ENCODE measurements at regions of chr3 and their contacts with region 1.

Region 1: GRCh38 chr3:153161138-153161713 is 800 bp upstream of the RAP2B start:
- DNase-seq: peak; percentile 81 to 96
- ATAC-seq: peak; percentile 72 to 89 (median 78)
- H3K4me3 ChIP-seq: peak overlapping the region; percentile 91
- H3K4me3 Mint-ChIP-seq: peak overlapping the region; percentile 98
- H3K27ac ChIP-seq: peak overlapping the region; percentile 87
- H3K27ac Mint-ChIP-seq: peak overlapping the region; percentile 90 to 92
- H3K4me1 ChIP-seq: peaks cover 11% of the 10 kb centered on the region
- H3K4me1 Mint-ChIP-seq: peaks cover 50 to 54% of the 10 kb centered on the region in 2 donors
- H3K27me3 ChIP-seq: no peaks in the 10 kb centered on the region
- H3K27me3 Mint-ChIP-seq: no peaks in the 10 kb centered on the region
- CTCF ChIP-seq: no peak

Region 2: DNA sequence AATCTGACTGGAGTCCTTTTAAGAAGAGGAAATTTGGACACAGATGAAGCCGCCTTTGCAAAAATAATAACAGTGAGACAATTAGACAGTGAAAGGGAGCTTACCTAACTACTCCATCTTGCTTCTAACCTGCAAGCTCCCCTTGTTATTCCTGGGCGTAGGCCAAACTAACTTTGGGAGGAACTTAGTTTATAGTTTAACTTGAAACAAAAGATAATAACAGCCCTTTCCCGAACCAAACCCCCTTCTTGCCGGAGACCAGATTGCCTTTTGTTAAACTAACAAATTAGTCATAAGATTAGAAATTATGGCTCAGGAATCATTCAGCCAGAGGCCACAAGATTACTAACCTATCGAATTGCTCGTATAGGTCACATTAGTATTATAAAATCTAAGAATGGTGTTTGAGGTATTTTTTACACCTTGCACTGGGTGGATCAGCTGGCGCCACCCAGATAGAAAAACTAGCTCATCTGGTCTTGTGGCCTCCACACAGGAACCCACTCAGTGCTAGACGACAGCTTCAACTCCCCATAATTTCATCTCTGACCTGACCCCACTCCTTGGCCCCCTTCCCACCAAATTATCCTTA is 64.5 kb before region 1 on chr3:
- intact Hi-C with region 1: no loop called
- DNase-seq: no peak
- ATAC-seq: no peak
- H3K4me3 ChIP-seq: no peak overlapping the region
- H3K4me3 Mint-ChIP-seq: no peak overlapping the region
- H3K27ac ChIP-seq: no peak overlapping the region
- H3K27ac Mint-ChIP-seq: no peak overlapping the region
- H3K4me1 ChIP-seq: no peaks in the 10 kb centered on the region
- H3K4me1 Mint-ChIP-seq: peaks cover 0 to 5% of the 10 kb centered on the region in 2 donors
- H3K27me3 ChIP-seq: no peaks in the 10 kb centered on the region
- H3K27me3 Mint-ChIP-seq: no peaks in the 10 kb centered on the region
- CTCF ChIP-seq: no peak

Region 3: DNA sequence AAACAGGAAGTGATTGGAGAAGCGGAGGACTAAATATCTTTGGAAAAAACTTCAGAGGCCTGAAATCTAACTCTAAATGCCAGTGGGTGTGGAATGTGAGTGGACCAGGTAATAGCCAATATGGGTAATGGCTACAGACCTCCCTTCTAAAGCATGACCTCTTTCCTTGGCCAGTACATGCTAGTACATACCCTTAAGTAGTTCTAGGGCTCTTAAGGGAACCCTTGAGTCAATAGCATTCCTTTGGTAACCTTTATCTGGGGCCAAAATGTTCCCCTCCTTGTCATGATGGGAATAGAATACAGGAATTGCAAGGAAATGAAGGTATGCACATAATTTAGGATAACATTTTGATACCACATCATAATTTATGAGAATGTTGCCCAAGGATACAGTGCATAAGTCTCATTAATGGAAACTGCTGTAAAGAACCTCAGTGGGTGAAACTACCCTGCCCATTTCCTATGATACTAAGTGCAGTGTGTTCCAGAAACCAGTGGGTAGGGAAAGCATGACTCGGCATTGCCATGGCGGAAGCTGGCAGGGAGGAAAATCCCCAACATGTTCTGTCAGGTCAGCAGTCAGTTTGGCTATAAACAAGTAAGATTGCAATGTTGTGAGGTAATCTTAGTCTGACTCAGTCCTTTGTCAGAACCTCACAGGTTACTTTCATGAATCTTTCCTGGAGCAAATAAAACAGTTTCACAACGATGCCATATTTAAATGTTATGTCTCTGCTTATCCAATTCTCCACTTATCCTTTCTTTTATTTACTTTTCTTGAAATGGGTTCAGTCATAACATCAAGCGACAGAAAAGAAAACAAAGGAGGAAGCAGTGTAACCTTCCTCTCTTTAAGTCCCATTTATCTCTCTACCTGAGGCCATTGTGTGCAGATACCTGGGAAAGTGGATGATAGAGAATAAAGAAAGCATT is 22.7 kb before region 1 on chr3:
- intact Hi-C with region 1: loop called (anchors 2 kb)
- DNase-seq: peak in 1 of 2 donors; percentile 16
- ATAC-seq: no peak
- H3K4me3 ChIP-seq: no peak overlapping the region
- H3K4me3 Mint-ChIP-seq: no peak overlapping the region
- H3K27ac ChIP-seq: no peak overlapping the region
- H3K27ac Mint-ChIP-seq: no peak overlapping the region
- H3K4me1 ChIP-seq: no peaks in the 10 kb centered on the region
- H3K4me1 Mint-ChIP-seq: peaks cover 16% of the 10 kb centered on the region in 2 donors
- H3K27me3 ChIP-seq: no peaks in the 10 kb centered on the region
- H3K27me3 Mint-ChIP-seq: no peaks in the 10 kb centered on the region
- CTCF ChIP-seq: no peak

Region 4: DNA sequence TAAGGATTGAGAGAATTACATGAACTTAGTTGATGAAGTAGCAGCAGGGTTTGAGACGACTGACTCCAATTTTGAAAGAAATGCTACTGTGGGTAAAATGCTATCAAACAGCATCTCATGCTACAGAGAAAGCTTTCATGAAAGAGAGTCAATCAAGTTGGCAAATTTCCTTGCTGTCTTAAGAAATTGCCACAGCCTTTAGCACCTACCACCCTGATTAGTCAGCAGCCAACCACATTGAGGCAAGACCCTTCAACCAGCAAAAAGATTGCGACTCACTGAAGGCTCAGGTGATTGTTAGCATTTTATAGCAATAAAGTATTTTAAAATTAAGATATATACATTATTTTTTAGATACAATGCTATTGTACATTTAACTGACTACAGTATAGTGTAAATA is 81.7 kb after region 1 on chr3:
- intact Hi-C with region 1: loop called (anchors 2 kb)
- DNase-seq: peak in 1 of 2 donors; percentile 59
- ATAC-seq: peak; percentile 80 to 98 (median 90)
- H3K4me3 ChIP-seq: no peak overlapping the region
- H3K4me3 Mint-ChIP-seq: peak overlapping the region; percentile 75
- H3K27ac ChIP-seq: peak overlapping the region; percentile 70
- H3K27ac Mint-ChIP-seq: peak overlapping the region; percentile 89 to 91
- H3K4me1 ChIP-seq: peaks cover 12% of the 10 kb centered on the region
- H3K4me1 Mint-ChIP-seq: peaks cover 47 to 53% of the 10 kb centered on the region in 2 donors
- H3K27me3 ChIP-seq: no peaks in the 10 kb centered on the region
- H3K27me3 Mint-ChIP-seq: no peaks in the 10 kb centered on the region
- CTCF ChIP-seq: no peak

Region 5: DNA sequence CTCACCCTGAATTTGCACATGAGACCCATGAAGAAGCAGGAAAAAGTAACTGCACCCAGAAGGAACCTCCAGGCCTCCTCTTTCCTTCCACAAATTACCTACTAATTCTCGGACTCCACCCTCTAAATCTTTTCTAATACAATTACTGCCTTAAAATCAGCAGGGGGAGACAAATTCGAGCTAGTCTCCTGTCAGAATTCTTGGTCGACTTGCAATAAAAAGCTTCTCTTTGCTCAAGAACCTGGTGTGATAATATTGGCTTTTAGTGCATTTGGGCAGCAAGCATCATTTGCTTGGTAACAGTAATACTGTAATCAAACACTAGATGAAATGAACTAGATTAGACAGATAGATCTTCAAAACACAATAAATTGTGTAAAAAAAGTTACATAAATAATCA is 282.7 kb after region 1 on chr3:
- intact Hi-C with region 1: loop called (anchors 10 kb)
- DNase-seq: peak in 1 of 2 donors; percentile 33
- ATAC-seq: no peak
- H3K4me3 ChIP-seq: no peak overlapping the region
- H3K4me3 Mint-ChIP-seq: no peak overlapping the region
- H3K27ac ChIP-seq: no peak overlapping the region
- H3K27ac Mint-ChIP-seq: no peak overlapping the region
- H3K4me1 ChIP-seq: no peaks in the 10 kb centered on the region
- H3K4me1 Mint-ChIP-seq: peaks cover 0 to 7% of the 10 kb centered on the region in 2 donors
- H3K27me3 ChIP-seq: no peaks in the 10 kb centered on the region
- H3K27me3 Mint-ChIP-seq: no peaks in the 10 kb centered on the region
- CTCF ChIP-seq: no peak

Region 6: DNA sequence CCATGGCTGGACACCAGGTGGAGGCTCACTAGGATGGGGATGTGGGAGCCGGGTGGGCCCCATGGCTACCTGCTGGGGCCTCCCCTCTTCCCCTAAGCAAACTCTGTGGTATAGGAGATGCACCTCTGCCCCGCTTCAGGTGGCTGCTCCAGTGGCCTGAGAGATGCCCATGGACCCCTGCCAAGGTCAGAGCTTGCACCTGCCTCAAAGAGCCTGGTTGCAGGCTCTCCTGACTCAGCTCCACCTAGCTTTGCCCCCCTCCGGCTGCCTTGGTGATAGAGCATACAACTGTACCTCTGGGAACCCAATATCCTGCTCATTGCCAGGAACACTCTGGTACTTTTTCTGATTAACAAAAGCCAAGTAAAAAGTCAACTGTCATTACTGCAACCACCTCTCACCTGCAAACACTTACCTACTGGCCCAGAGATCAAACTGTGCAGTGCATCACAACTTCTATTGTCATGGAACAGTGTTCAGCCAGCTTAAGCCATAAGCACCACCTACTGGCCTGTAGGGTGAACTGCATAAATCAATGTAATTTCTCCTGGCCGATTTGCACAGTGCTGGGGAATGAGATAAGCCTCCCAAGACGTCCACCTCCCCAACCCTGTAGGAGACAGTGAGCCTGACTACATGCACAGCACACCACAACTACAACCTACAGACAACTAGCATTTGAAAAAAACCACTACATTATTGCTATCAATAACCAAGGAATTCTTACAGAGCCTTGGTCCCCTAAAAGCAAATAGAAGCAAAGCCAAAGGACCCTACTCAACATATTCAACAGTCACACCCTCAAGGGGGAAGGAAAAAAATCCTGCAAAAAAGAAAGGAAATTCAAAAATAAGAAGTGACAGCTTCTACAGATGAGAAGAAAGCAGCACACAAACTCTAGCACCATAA is 607.6 kb after region 1 on chr3:
- intact Hi-C with region 1: loop called (anchors 2 kb)
- DNase-seq: peak in 1 of 2 donors; percentile 78
- ATAC-seq: peak; percentile 88 to 99 (median 95)
- H3K4me3 ChIP-seq: no peak overlapping the region
- H3K4me3 Mint-ChIP-seq: no peak overlapping the region
- H3K27ac ChIP-seq: no peak overlapping the region
- H3K27ac Mint-ChIP-seq: no peak overlapping the region
- H3K4me1 ChIP-seq: no peaks in the 10 kb centered on the region
- H3K4me1 Mint-ChIP-seq: peaks cover 5 to 7% of the 10 kb centered on the region in 2 donors
- H3K27me3 ChIP-seq: no peaks in the 10 kb centered on the region
- H3K27me3 Mint-ChIP-seq: peaks cover 19 to 44% of the 10 kb centered on the region in 2 donors
- CTCF ChIP-seq: peak; percentile 79

Region 7: GRCh38 chr3:154323891-154324738 is 1162.9 kb after region 1 on chr3 and contains the start of gene DHX36:
- intact Hi-C with region 1: loop called (anchors 5 kb)
- DNase-seq: peak; percentile 88 to 96
- ATAC-seq: peak; percentile 85 to 94 (median 90)
- H3K4me3 ChIP-seq: peak within 1 kb of the TSS; percentile 81
- H3K4me3 Mint-ChIP-seq: peak within 1 kb of the TSS; percentile 94
- H3K27ac ChIP-seq: peak within 1 kb of the TSS; percentile 99
- H3K27ac Mint-ChIP-seq: no peak within 1 kb of the TSS
- H3K4me1 ChIP-seq: peaks cover 12% of the 10 kb centered on the region
- H3K4me1 Mint-ChIP-seq: peaks cover 18 to 23% of the 10 kb centered on the region in 2 donors
- H3K27me3 ChIP-seq: no peaks in the 10 kb centered on the region
- H3K27me3 Mint-ChIP-seq: peaks cover 0 to 11% of the 10 kb centered on the region in 2 donors
- CTCF ChIP-seq: no peak
- total RNA-seq, gene DHX36: 97.3 to 111 (median 102) TPM